CD8-positive, alpha-beta T cell (primary cell): ENCODE measurements at regions of chr22 and their contacts with region 1.

Region 1: DNA sequence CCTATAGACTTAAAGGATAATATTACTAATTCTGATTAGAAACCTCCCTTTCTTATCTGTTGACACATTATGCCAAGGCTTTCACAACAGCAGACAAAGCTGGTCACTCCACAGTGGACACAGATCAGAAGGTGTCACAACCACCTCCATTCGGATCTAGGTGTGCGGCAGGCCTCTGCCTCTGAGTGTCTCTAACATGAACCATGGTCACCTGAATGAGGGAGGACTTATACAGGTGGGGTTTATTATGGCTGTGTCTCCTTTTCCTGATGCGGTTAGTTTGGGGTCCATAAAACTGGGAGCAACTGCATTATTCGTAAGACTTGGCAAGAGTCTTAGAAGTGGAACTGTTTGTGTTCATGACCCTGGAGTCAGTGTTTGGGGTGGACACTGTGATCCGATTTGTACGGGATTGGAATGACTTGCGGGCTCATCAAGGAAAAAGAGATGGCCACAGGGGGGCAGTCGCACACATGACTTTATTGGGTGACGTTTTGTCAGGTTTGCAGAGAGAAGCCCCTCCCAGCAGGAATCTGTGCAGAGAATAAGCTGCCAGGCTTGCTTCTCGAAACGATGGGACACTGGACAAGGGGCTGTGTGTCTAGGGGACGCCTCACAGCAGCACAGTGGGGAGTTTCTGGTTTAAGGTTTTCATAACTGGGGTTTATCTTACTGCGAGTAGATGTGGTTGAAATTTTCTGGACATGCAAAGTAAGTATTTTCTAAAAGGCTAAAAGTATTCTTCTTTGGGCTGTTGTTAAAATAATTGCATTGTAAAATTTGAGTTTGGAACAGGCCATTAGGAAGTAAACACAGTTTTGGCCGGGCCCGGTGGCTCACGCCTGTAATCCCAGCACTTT is 90.6 kb downstream of the GAB4 start:
- DNase-seq: peak; percentile 3 to 65 (median 42)
- ATAC-seq: no peak
- H3K4me3 ChIP-seq: no peak overlapping the region
- H3K4me3 Mint-ChIP-seq: no peak overlapping the region
- H3K27ac ChIP-seq: no peak overlapping the region
- H3K27ac Mint-ChIP-seq: no peak overlapping the region
- H3K4me1 ChIP-seq: no peaks in the 10 kb centered on the region
- H3K4me1 Mint-ChIP-seq: no peaks in the 10 kb centered on the region
- H3K27me3 ChIP-seq: peaks cover 2 to 4% of the 10 kb centered on the region in 2 experiments
- H3K27me3 Mint-ChIP-seq: peaks cover 26% of the 10 kb centered on the region
- CTCF ChIP-seq: peak; percentile 46

Region 2: GRCh38 chr22:17057959-17058814 is 140.8 kb after region 1 on chr22:
- CTCF ChIA-PET with region 1: interaction called, 8 read pairs
- POLR2A ChIA-PET with region 1: no interaction called
- intact Hi-C with region 1: loop called in 1 of 2 experiments (anchors 1 kb)
- DNase-seq: peak in 7 of 9 experiments; percentile 25 to 65 (median 52)
- ATAC-seq: peak; percentile 62
- H3K4me3 ChIP-seq: no peak overlapping the region
- H3K4me3 Mint-ChIP-seq: no peak overlapping the region
- H3K27ac ChIP-seq: no peak overlapping the region
- H3K27ac Mint-ChIP-seq: no peak overlapping the region
- H3K4me1 ChIP-seq: peaks cover 3% of the 10 kb centered on the region
- H3K4me1 Mint-ChIP-seq: peaks cover 4% of the 10 kb centered on the region
- H3K27me3 ChIP-seq: no peaks in the 10 kb centered on the region
- H3K27me3 Mint-ChIP-seq: peaks cover 7% of the 10 kb centered on the region
- CTCF ChIP-seq: peak; percentile 96

Region 3: DNA sequence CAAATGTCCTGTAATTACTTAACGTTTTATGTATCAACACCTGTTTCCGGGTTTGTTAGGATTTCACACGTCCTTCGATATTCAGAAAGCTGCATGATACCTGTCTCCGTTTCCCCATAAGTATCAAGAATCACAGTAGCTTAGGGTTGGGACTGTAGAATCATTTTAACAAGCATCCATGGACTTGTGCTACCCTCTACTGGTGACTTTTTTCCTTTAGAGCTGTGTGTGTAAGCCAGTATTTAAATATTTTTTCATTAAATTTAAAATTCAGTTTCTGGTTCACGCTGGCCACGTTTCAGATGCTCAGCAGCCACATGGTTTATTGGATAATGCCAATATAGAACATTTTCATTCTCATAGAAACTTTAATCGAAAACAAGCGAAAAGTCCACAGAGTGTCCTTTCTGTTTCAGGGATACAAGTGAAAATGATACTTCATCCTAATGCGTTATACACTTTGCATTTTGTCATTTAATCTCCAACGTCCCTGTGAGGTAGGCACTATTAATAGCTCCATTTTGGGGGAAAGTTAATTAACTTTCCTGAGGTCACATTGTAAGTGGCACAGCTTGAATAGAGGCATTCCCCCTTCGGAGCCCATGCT is 584.4 kb after region 1 on chr22:
- CTCF ChIA-PET with region 1: interaction called, 4 read pairs
- POLR2A ChIA-PET with region 1: no interaction called
- intact Hi-C with region 1: loop called (anchors 1 to 5 kb)
- DNase-seq: peak in 3 of 9 experiments; percentile 30 to 77 (median 64)
- ATAC-seq: peak; percentile 73
- H3K4me3 ChIP-seq: no peak overlapping the region
- H3K4me3 Mint-ChIP-seq: no peak overlapping the region
- H3K27ac ChIP-seq: no peak overlapping the region
- H3K27ac Mint-ChIP-seq: no peak overlapping the region
- H3K4me1 ChIP-seq: no peaks in the 10 kb centered on the region
- H3K4me1 Mint-ChIP-seq: peaks cover 2% of the 10 kb centered on the region
- H3K27me3 ChIP-seq: no peaks in the 10 kb centered on the region
- H3K27me3 Mint-ChIP-seq: peaks cover 8% of the 10 kb centered on the region
- CTCF ChIP-seq: peak; percentile 70